CD4-positive, alpha-beta T cell (primary cell): ENCODE measurements at regions of chr6 and their contacts with region 1.

Region 1: GRCh38 chr6:70686548-70687133 is 19.0 kb downstream of the SMAP1 start:
- DNase-seq: peak in 4 of 14 experiments; percentile 26 to 69 (median 60)
- ATAC-seq: peak; percentile 64
- H3K4me3 ChIP-seq: no peak overlapping the region
- H3K4me3 Mint-ChIP-seq: no peak overlapping the region
- H3K27ac ChIP-seq: no peak overlapping the region
- H3K27ac Mint-ChIP-seq: no peak overlapping the region
- H3K4me1 ChIP-seq: peaks cover 5% of the 10 kb centered on the region
- H3K4me1 Mint-ChIP-seq: peaks cover 67% of the 10 kb centered on the region
- H3K27me3 ChIP-seq: no peaks in the 10 kb centered on the region
- H3K27me3 Mint-ChIP-seq: no peaks in the 10 kb centered on the region
- CTCF ChIP-seq: peak; percentile 83

Region 2: DNA sequence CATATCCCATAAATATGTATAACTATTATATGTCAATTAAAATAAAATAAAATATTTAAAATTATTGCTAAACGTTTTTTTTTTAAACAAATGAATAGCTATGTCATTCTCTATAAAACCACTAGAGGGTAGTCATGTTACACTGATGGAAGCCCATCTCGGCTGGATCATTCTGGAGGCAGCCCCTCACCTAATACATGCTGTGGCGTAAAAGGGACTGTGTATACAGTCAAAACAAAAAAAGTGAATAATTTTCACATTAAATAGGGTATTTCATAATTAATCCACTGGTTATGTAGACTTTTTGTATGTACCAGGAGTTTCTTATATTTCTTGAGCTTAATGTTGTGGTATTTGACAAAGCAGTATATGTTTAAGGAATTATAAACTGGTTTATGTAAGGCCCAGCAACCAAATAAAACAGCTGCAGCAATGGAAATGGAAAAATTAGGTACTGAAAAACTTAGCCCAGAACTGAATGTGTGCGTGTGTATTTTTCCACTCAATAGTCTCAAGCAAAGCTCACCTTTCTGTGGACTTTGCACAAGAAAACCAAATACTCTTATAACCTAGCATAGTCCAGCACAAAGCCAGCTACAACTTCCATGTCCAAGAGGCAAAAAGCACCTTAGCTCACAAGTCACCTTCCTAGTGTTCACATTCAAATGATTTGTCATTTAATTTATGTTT is 465.5 kb before region 1 on chr6:
- CTCF ChIA-PET with region 1: interaction called, 4 read pairs
- POLR2A ChIA-PET with region 1: no interaction called
- intact Hi-C with region 1: loop called in 1 of 2 experiments (anchors 5 kb)
- DNase-seq: peak in 4 of 14 experiments; percentile 5 to 29 (median 20)
- ATAC-seq: no peak
- H3K4me3 ChIP-seq: no peak overlapping the region
- H3K4me3 Mint-ChIP-seq: no peak overlapping the region
- H3K27ac ChIP-seq: no peak overlapping the region
- H3K27ac Mint-ChIP-seq: no peak overlapping the region
- H3K4me1 ChIP-seq: no peaks in the 10 kb centered on the region
- H3K4me1 Mint-ChIP-seq: no peaks in the 10 kb centered on the region
- H3K27me3 ChIP-seq: no peaks in the 10 kb centered on the region
- H3K27me3 Mint-ChIP-seq: peaks cover 18% of the 10 kb centered on the region
- CTCF ChIP-seq: peak; percentile 68

Region 3: GRCh38 chr6:70369332-70369950 is 317.2 kb before region 1 on chr6:
- CTCF ChIA-PET with region 1: interaction called, 3 read pairs
- POLR2A ChIA-PET with region 1: no interaction called
- intact Hi-C with region 1: loop called in 1 of 2 experiments (anchors 5 kb)
- DNase-seq: peak; percentile 40 to 82 (median 51)
- ATAC-seq: peak; percentile 90
- H3K4me3 ChIP-seq: no peak overlapping the region
- H3K4me3 Mint-ChIP-seq: no peak overlapping the region
- H3K27ac ChIP-seq: no peak overlapping the region
- H3K27ac Mint-ChIP-seq: no peak overlapping the region
- H3K4me1 ChIP-seq: peaks cover 3% of the 10 kb centered on the region
- H3K4me1 Mint-ChIP-seq: no peaks in the 10 kb centered on the region
- H3K27me3 ChIP-seq: no peaks in the 10 kb centered on the region
- H3K27me3 Mint-ChIP-seq: peaks cover 24% of the 10 kb centered on the region
- CTCF ChIP-seq: peak; percentile 86

Region 4: DNA sequence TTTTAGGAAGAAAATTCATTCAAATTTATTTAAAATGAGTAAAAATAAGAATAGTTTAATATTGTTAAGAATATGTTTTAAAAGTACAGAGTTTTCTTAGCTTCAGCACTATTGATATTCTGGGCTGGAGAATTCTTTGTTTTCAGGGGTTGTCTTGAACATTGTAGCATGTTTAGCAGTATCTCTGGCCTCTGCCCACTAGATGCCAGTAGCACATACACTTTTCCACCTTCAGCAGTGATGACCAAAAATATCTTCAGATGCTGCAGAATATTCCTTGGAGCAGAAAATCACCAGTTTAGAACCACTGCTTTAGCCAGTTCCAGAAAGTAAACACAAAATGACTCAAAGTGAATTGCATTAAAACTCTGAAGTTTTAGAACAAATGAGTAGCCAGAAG is 139.3 kb before region 1 on chr6:
- CTCF ChIA-PET with region 1: interaction called, 6 read pairs
- POLR2A ChIA-PET with region 1: no interaction called
- intact Hi-C with region 1: loop called (anchors 1 to 2 kb)
- DNase-seq: peak in 3 of 14 experiments; percentile 27 to 48 (median 39)
- ATAC-seq: no peak
- H3K4me3 ChIP-seq: no peak overlapping the region
- H3K4me3 Mint-ChIP-seq: no peak overlapping the region
- H3K27ac ChIP-seq: no peak overlapping the region
- H3K27ac Mint-ChIP-seq: no peak overlapping the region
- H3K4me1 ChIP-seq: no peaks in the 10 kb centered on the region
- H3K4me1 Mint-ChIP-seq: no peaks in the 10 kb centered on the region
- H3K27me3 ChIP-seq: no peaks in the 10 kb centered on the region
- H3K27me3 Mint-ChIP-seq: no peaks in the 10 kb centered on the region
- CTCF ChIP-seq: peak; percentile 34

Region 5: DNA sequence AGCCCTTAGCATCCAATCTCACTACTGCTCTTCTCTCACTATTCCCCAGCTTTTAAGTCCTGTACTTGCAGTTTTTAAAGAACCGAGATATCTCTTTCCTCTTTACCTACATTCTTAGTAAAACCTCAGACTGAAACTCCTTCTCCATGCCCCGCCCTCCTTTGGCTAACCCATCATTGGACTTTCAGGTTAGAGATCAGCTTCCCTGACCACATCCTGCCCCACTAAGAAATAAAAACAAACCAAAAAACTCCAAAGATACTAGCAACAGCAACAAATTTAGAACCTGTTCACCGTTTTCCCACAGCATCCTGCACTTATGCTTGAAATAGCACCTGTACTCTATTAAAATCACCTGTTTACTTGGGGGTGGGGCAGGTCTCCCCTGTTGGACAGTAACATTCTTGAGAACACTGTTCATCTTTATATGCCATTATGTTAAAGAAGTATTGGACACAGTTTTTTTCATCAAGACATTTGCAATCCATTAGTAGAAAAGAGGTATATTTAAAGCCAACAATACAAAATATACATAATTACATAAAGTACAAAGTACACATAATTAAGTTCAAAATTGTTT is 35.2 kb before region 1 on chr6:
- CTCF ChIA-PET with region 1: interaction called, 3 read pairs
- POLR2A ChIA-PET with region 1: no interaction called
- intact Hi-C with region 1: loop called in 1 of 2 experiments (anchors 1 kb)
- DNase-seq: peak in 12 of 14 experiments; percentile 14 to 87 (median 34)
- ATAC-seq: peak; percentile 97
- H3K4me3 ChIP-seq: no peak overlapping the region
- H3K4me3 Mint-ChIP-seq: peak overlapping the region; percentile 70
- H3K27ac ChIP-seq: peak overlapping the region in 1 of 2 donors; percentile 55
- H3K27ac Mint-ChIP-seq: peak overlapping the region; percentile 64
- H3K4me1 ChIP-seq: peaks cover 23% of the 10 kb centered on the region
- H3K4me1 Mint-ChIP-seq: peaks cover 30% of the 10 kb centered on the region
- H3K27me3 ChIP-seq: no peaks in the 10 kb centered on the region
- H3K27me3 Mint-ChIP-seq: no peaks in the 10 kb centered on the region
- CTCF ChIP-seq: no peak